ENCODE measurements at regions of chr16 and their contacts with region 1.

Region 1: GRCh38 chr16:58629572-58630104 is at the start of gene CNOT1:
- DNase-seq: peak; percentile 99
- H3K4me3 Mint-ChIP-seq: peak within 1 kb of the TSS; percentile 99
- H3K27ac Mint-ChIP-seq: peak within 1 kb of the TSS; percentile 100
- H3K4me1 Mint-ChIP-seq: peaks cover 7% of the 10 kb centered on the region
- H3K27me3 Mint-ChIP-seq: no peaks in the 10 kb centered on the region
- CTCF ChIP-seq: no peak
- total RNA-seq, gene CNOT1: 201 and 219 TPM in 2 replicates

Region 2: DNA sequence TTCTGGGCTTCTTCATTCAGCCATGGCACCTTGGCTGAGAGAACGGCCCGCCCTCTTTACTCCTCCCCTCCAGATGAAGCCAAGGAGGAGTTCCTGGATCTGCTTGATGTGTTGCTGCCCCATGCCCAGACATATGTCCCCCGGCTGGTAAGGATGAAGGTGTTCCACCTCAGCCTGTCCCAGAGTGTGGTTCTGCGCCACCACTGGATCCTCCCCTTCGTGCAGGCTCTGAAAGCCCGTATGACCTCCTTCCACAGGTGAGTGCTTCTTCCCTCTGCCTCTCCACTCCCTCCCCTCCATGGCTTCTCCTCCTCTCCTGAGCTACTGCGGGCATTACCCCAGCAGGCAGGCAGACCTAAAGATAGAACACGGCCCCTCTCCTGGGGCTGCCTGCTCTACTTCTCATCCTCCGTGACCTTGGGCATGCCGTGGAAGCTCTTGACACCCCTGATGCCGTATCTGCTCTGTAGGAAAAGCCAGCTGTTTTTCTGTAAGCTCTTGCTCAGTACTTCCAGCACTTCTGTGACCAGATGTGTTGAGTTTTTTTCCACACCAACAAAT is 619.7 kb before region 1 on chr16:
- CTCF ChIA-PET with region 1: no interaction called
- POLR2A ChIA-PET with region 1: no interaction called
- intact Hi-C with region 1: loop called (anchors 5 kb)
- DNase-seq: no peak
- H3K4me3 Mint-ChIP-seq: no peak overlapping the region
- H3K27ac Mint-ChIP-seq: no peak overlapping the region
- H3K4me1 Mint-ChIP-seq: peaks cover 8% of the 10 kb centered on the region
- H3K27me3 Mint-ChIP-seq: no peaks in the 10 kb centered on the region
- CTCF ChIP-seq: no peak

Region 3: DNA sequence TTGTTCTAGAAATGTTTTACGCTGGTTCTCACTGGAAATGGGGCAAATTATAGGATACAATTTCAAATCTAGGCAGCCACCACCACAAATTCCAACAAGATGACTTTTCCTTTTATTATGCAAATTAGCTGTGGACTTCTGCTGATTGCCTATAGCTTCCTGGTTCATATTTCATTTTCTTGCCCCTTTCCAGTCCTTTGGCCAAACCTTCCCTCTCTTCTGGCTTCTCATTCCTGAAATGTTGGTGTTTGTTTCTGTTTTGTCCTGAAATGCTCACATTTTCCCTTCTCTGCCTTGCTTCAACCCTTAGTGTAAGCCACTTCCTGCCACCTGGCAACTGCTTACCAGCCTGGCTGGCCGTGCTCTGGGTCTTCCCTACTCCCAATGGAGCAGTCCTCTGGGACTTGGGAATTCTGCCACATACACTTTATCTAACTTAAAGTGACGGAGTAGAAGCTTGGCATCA is 348.8 kb before region 1 on chr16:
- CTCF ChIA-PET with region 1: no interaction called
- POLR2A ChIA-PET with region 1: no interaction called
- intact Hi-C with region 1: no loop called
- DNase-seq: peak; percentile 60
- H3K4me3 Mint-ChIP-seq: no peak overlapping the region
- H3K27ac Mint-ChIP-seq: peak overlapping the region; percentile 82
- H3K4me1 Mint-ChIP-seq: peaks cover 16% of the 10 kb centered on the region
- H3K27me3 Mint-ChIP-seq: no peaks in the 10 kb centered on the region
- CTCF ChIP-seq: no peak

Region 4: GRCh38 chr16:58409316-58409973 is 220.2 kb before region 1 on chr16:
- CTCF ChIA-PET with region 1: no interaction called
- POLR2A ChIA-PET with region 1: no interaction called
- intact Hi-C with region 1: no loop called
- DNase-seq: peak; percentile 60
- H3K4me3 Mint-ChIP-seq: no peak overlapping the region
- H3K27ac Mint-ChIP-seq: peak overlapping the region; percentile 50
- H3K4me1 Mint-ChIP-seq: peaks cover 16% of the 10 kb centered on the region
- H3K27me3 Mint-ChIP-seq: no peaks in the 10 kb centered on the region
- CTCF ChIP-seq: no peak

Measured in MCF 10A (cell line).